ENCODE measurements at regions of chr10 and their contacts with region 1.

Region 1: GRCh38 chr10:70461215-70461986 is 17.2 kb upstream of the PALD1 start:
- DNase-seq: peak in 3 of 5 donors; percentile 55 to 71 (median 55)
- ATAC-seq: peak; percentile 35 to 66 (median 42)
- H3K4me3 ChIP-seq: no peak overlapping the region
- H3K27ac ChIP-seq: no peak overlapping the region
- H3K4me1 ChIP-seq: peaks cover 0 to 51% (median 30%) of the 10 kb centered on the region in 12 donors
- H3K27me3 ChIP-seq: peaks cover 0 to 17% (median 0%) of the 10 kb centered on the region in 9 donors
- CTCF ChIP-seq: peak; percentile 73 to 93 (median 86)
- POLR2A ChIP-seq: no peak

Region 2: GRCh38 chr10:69988094-69988493 is 473.3 kb before region 1 on chr10:
- intact Hi-C with region 1: no loop called
- DNase-seq: no peak
- ATAC-seq: no peak
- H3K4me3 ChIP-seq: no peak overlapping the region
- H3K27ac ChIP-seq: no peak overlapping the region
- H3K4me1 ChIP-seq: no peaks in the 10 kb centered on the region
- H3K27me3 ChIP-seq: peaks cover 0 to 18% (median 0%) of the 10 kb centered on the region in 9 donors
- CTCF ChIP-seq: no peak
- POLR2A ChIP-seq: no peak

Region 3: DNA sequence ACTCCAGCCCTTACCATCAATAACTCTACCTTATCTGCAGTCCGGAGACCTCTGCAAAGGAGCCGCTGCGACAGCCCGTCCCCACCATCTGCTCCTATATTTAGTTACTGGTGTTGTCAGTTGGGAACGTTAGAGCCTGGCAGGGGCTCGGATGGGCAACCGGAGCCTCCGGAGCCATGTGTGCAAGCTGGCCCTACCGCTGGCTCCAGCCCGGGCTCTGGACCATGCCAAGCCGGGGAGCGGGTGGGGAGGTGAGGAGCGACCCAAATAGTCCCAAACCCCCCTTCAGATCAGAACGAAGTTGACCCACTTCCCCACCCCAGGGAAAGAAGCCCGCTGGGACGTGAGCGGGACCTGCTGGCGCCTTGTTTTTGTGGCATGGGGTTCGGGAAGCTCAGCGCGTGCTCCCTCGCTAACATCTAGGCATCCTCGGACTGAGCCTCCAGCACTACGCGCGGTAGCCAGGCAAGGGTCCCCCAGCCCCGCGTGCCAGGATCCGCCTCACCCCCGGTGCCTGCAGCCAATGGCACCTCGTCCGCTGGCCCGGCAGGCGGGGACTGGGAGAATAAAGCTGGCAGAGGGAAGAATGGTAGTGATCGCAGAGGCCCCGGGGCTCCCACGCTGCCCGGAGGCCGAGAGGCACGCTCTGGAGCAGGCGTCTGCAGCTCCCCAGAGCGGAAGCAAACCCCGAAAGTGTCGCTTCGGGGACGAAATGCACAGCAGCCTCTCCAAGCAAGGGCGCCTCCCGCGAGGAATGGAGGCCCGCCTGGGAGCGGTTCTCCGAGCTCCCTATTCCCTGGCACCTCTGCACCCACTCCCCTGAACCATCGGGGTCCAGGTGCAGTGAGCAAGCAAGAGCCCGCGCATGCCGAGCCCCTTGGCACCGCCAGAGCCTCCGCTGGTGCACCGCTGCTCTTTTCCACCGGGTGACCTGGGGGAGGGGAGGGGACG is 79.7 kb before region 1 on chr10:
- intact Hi-C with region 1: no loop called
- DNase-seq: peak; percentile 60 to 84 (median 74)
- ATAC-seq: peak; percentile 66 to 80 (median 70)
- H3K4me3 ChIP-seq: peak overlapping the region; percentile 64 to 96 (median 78)
- H3K27ac ChIP-seq: peak overlapping the region; percentile 12 to 93 (median 84)
- H3K4me1 ChIP-seq: peaks cover 0 to 41% (median 17%) of the 10 kb centered on the region in 12 donors
- H3K27me3 ChIP-seq: no peaks in the 10 kb centered on the region
- CTCF ChIP-seq: no peak
- POLR2A ChIP-seq: no peak

Region 4: GRCh38 chr10:70404036-70404786 is 57.2 kb before region 1 on chr10 and contains the start of gene EIF4EBP2:
- intact Hi-C with region 1: loop called in 1 of 10 experiments (anchors 2 kb)
- DNase-seq: peak; percentile 97 to 99 (median 98)
- ATAC-seq: peak; percentile 93 to 96 (median 94)
- H3K4me3 ChIP-seq: peak within 1 kb of the TSS; percentile 61 to 99 (median 89)
- H3K27ac ChIP-seq: peak within 1 kb of the TSS; percentile 92 to 100 (median 98)
- H3K4me1 ChIP-seq: peaks cover 9 to 42% (median 28%) of the 10 kb centered on the region in 12 donors
- H3K27me3 ChIP-seq: no peaks in the 10 kb centered on the region
- CTCF ChIP-seq: peak in 1 of 12 donors; percentile 12
- POLR2A ChIP-seq: peak; percentile 81 to 97
- total RNA-seq, gene EIF4EBP2: 78.3 to 150 (median 89.7) TPM

Region 5: DNA sequence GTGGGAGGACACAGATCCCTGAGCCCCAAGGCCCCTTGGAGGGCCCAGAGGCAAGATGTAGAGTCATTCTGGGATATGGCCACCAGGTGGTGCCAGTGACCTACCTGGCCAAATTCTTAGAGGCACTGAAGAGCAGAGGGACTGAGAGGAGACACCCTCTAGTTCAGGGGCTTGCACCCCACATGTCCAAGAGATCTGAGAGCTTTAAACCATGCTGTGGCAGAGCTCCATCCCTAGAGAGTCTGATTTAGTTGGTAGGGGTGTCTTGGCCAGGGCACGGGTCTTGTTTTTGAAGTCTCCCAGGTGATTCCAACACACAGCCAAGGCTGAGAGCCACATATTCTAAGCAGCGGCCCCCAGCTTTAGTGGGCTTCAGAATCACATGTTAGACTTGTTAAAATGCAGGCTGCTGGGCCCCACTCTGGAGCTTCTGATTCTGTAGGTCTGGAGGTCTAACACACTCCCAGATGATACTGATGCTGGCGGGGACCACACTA is 88.6 kb after region 1 on chr10:
- intact Hi-C with region 1: loop called in 1 of 10 experiments (anchors 2 kb)
- DNase-seq: peak; percentile 49 to 76 (median 60)
- ATAC-seq: peak; percentile 63 to 77 (median 76)
- H3K4me3 ChIP-seq: no peak overlapping the region
- H3K27ac ChIP-seq: no peak overlapping the region
- H3K4me1 ChIP-seq: peaks cover 0 to 20% (median 2%) of the 10 kb centered on the region in 12 donors
- H3K27me3 ChIP-seq: no peaks in the 10 kb centered on the region
- CTCF ChIP-seq: peak; percentile 82 to 97 (median 90)
- POLR2A ChIP-seq: no peak

Region 6: DNA sequence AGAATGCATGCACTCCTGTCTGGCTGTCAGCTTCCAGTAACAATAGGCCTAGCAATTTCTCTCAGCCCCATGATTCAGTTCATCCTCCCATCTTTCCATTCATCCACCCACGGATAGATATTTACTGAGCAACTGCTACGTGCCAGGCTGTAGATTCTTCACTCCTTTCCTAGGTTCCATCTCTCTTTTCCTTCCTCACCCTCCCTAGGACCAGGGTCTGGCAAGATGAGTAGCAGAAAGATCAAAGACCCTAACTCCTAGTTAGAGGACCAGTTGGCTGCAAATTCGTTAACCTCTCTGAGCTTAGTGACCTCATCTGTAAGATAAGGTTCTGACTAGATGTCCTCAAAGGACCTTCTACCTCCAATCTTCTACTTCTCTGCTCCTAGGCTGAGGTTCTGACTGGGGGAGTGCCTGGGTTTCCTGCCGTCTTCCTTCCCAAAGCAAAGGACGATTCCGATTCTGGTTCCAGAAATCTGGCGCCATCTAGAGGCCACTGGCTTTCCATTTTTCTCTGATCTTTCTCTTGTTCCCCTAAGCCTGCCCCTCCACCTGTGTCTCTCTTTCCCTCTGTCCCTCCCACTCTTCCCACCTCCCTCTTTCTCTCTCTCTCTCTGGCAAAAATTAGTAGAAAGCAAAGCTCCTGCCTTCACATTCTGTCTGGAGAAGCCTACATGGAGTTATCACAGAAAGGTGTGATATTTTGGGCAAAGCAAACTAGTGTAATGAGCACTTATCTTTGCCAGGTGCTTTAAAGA is 297.5 kb after region 1 on chr10:
- intact Hi-C with region 1: loop called (anchors 2 to 10 kb)
- DNase-seq: peak; percentile 59 to 77 (median 73)
- ATAC-seq: peak; percentile 27 to 80 (median 53)
- H3K4me3 ChIP-seq: no peak overlapping the region
- H3K27ac ChIP-seq: no peak overlapping the region
- H3K4me1 ChIP-seq: peaks cover 0 to 19% (median 2%) of the 10 kb centered on the region in 12 donors
- H3K27me3 ChIP-seq: no peaks in the 10 kb centered on the region
- CTCF ChIP-seq: peak; percentile 65 to 87 (median 76)
- POLR2A ChIP-seq: no peak